ENCODE measurements at regions of chr6 and their contacts with region 1.

Region 1: DNA sequence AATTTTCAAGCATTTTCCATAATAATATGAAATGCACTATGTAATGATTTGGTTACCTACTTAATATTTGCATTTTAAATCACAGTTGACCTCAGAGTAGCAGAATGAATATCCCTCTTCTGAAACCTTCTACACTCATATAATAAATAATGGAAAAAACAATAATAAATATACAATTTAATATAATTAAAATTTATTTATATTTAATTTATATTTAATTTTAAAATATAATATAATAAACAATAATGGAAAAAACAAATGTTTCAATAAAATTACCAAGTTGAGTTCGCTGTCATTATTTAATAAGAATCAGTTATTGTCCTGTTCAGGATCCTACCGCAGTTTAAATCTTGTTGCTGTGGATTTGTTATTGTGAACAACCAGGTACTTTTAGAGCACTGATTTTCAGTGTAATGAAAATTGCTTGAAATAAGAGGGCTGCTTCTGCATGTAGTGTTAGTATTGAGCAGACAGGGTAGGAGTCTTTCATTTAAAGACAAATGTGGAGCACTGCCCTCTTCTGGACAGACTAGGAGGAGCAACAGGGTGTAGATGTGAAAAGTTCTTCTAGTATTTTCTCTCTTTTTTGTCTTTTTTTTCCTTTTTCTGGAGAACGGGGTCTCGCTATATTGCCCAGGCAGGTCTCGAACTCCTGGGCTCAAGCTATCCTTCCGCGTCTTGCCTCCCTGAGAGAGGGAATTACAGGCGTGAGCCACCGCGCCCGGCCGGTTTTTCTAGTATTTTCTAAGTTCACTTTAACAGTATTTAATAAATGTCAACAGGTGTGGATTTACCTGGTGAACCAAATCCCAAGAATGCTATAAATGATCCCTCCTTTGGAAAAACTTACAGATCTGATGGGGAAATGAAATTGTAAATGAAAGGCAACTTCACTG is 13.6 kb downstream of the TRAPPC3L start:
- DNase-seq: peak; percentile 79
- H3K4me3 Mint-ChIP-seq: no peak overlapping the region
- H3K27ac Mint-ChIP-seq: no peak overlapping the region
- H3K4me1 Mint-ChIP-seq: no peaks in the 10 kb centered on the region
- H3K27me3 Mint-ChIP-seq: peaks cover 11% of the 10 kb centered on the region

Region 2: DNA sequence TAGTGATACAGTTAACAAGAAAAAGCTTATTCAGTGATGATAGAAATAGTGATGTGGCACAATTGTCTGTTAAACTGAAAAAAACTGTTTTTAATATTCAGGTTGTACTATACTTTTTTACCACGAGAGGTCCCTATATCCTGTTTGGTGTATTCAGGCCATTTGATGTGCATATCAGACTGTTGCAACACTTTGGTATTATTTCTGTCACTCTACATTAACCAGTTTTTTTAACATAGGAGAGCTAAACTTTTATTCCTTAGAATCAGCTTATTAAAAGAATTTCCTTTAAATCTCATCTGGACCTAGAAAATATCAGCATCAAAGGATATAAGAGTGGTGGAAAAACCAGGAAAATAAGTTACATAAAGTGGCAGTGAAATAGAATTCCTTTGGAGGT is 314.9 kb before region 1 on chr6:
- CTCF ChIA-PET with region 1: no interaction called
- intact Hi-C with region 1: loop called (anchors 1 kb)
- DNase-seq: no peak
- H3K4me3 Mint-ChIP-seq: no peak overlapping the region
- H3K27ac Mint-ChIP-seq: no peak overlapping the region
- H3K4me1 Mint-ChIP-seq: peaks cover 4% of the 10 kb centered on the region
- H3K27me3 Mint-ChIP-seq: no peaks in the 10 kb centered on the region

Region 3: DNA sequence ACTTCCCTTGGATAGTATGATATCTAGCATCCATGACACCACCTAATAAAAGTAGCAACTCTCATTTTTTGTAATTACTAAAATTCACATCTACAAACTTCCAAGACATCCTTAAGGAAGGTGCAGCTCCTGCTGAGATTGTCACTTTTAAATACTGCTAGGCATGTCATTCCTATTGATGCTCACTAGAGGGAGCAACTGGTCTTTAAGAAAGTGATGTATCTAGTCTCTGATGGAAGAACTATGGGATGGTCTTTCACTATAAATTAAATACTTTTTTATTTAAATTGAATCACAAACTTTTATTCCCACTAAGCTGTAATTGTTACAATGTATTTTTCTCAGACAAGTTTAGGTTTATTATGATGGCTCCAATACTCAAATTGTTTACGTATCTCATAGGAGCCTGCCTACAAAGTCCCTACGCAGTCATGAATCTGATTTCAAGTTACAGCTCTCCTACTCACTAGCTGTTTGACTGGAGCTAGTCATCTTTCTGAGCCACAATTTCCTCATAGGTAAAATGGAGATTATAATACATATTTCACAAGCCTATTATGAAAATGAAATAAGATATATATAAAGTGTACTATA is 244.1 kb before region 1 on chr6:
- CTCF ChIA-PET with region 1: interaction called, 52 read pairs
- intact Hi-C with region 1: loop called (anchors 1 kb)
- DNase-seq: no peak
- H3K4me3 Mint-ChIP-seq: no peak overlapping the region
- H3K27ac Mint-ChIP-seq: no peak overlapping the region
- H3K4me1 Mint-ChIP-seq: no peaks in the 10 kb centered on the region
- H3K27me3 Mint-ChIP-seq: no peaks in the 10 kb centered on the region

Region 4: DNA sequence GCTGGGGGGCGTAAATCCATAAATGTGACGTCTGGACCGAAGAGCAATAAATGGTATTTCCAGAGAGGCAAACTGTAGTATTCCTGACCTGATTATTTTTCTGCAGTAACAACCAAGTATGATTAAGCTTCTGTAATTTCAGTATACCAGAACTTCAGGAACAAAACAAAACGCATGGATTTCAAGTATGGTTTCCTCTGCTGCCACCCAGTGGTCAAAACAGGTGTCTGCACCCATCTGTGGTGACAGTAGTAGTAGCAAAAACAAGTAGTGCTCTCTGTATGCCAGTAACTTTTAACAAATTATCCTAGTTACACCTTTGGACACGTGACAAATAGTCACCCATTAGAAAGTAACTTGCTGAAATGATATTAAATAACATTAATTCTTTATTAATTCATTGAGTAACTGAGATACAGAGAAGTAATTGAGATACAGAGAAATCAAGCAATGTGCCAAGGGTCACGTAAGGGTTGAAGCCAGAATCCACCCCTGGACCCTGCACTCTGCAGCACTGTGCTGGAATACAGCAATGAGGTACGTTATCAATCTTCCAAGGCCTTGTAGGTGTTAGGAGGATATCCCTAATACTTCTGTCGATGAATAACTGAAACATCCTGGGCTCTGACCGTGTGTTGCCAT is 29.6 kb after region 1 on chr6:
- CTCF ChIA-PET with region 1: interaction called, 32 read pairs
- intact Hi-C with region 1: loop called (anchors 1 kb)
- DNase-seq: peak; percentile 80
- H3K4me3 Mint-ChIP-seq: no peak overlapping the region
- H3K27ac Mint-ChIP-seq: no peak overlapping the region
- H3K4me1 Mint-ChIP-seq: peaks cover 3% of the 10 kb centered on the region
- H3K27me3 Mint-ChIP-seq: peaks cover 11% of the 10 kb centered on the region

Region 5: GRCh38 chr6:116847227-116847626 is 315.3 kb after region 1 on chr6:
- CTCF ChIA-PET with region 1: no interaction called
- intact Hi-C with region 1: loop called (anchors 1 kb)
- DNase-seq: no peak
- H3K4me3 Mint-ChIP-seq: no peak overlapping the region
- H3K27ac Mint-ChIP-seq: no peak overlapping the region
- H3K4me1 Mint-ChIP-seq: no peaks in the 10 kb centered on the region
- H3K27me3 Mint-ChIP-seq: peaks cover 7% of the 10 kb centered on the region

Measured in activated naive CD4-positive, alpha-beta T cell treated with anti-CD3 and anti-CD28 coated beads for 36 hours (primary cell).